Activated CD4-positive, alpha-beta memory T cell treated with anti-CD3 and anti-CD28 coated beads for 36 hours (primary cell): ENCODE measurements at regions of chr19 and their contacts with region 1.

Region 1: DNA sequence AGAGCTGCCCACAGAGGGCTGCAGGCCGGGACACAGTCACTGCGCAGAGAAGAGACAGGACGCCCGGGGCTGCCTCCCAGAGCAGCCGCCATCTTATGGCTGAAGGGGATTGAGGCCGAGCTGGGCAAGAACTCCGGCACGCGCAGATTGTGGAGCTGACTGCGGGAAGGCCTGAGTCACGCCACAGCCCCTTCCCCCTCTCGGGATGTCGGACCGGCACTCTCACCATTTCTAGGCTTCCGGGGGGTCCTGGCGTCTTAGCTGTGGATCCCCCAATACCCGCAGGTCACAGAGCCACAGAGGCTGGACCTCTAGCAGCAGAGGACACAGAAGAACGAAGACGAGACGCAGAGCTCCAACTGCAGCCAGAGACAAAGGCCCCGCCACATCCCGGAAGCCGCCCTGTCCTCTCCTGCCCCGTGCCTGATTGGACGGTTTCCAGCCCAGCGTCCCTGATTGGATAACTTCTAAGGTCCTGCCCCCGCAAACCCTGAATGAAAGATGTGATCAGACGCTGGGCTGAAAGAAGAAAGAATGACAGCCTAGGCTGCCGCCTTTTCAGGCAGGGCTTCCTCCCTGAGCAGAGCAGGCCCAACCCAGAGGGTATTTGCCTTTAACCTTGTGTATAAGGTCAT is at the start of gene ZNF43:
- DNase-seq: peak; percentile 96
- H3K4me3 Mint-ChIP-seq: peak within 1 kb of the TSS; percentile 95
- H3K27ac Mint-ChIP-seq: peak within 1 kb of the TSS; percentile 99
- H3K4me1 Mint-ChIP-seq: peaks cover 37% of the 10 kb centered on the region
- H3K27me3 Mint-ChIP-seq: no peaks in the 10 kb centered on the region
- total RNA-seq, gene ZNF43: 25.2 to 25.3 TPM

Region 2: DNA sequence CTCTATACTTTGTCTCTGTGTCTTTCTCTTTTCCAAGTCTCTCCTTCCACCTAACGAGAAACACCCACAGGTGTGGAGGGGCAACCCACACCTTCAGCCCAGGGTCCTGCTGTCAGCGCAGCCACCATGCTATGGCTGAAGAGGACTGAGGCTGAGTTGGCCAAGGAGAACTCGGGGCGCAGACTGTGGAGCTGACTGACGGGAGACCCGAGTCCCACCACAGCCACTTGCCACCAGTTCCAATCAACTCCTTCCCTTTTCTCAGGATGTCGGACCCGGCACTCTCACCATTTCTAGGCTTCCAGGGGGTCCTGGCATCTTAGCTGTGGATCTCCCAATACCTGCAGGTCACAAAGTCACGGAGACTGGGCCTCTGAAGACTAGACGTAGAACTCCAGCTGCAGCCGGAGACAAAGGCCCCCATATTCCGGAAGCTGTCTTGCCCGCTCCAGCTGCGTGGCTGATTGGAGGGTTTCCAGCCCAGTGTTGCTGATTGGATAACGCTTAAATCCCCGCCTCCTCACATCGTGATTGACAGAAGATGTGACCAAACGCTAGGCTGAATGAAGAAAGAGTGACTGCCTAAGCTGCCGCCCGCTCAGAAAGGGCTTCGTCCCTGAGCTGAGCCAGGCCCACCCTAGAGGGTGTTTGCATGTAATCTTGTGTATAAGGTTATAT is 267.0 kb before region 1 on chr19:
- CTCF ChIA-PET with region 1: no interaction called
- POLR2A ChIA-PET with region 1: no interaction called
- intact Hi-C with region 1: loop called (anchors 10 kb)
- DNase-seq: peak; percentile 92
- H3K4me3 Mint-ChIP-seq: peak overlapping the region; percentile 94
- H3K27ac Mint-ChIP-seq: peak overlapping the region; percentile 91
- H3K4me1 Mint-ChIP-seq: peaks cover 23% of the 10 kb centered on the region
- H3K27me3 Mint-ChIP-seq: no peaks in the 10 kb centered on the region

Region 3: GRCh38 chr19:21851596-21852345 is 15.8 kb after region 1 on chr19:
- CTCF ChIA-PET with region 1: interaction called, 11 read pairs
- POLR2A ChIA-PET with region 1: interaction called, 46 read pairs
- intact Hi-C with region 1: loop called (anchors 1 kb)
- DNase-seq: peak; percentile 96
- H3K4me3 Mint-ChIP-seq: peak overlapping the region; percentile 90
- H3K27ac Mint-ChIP-seq: peak overlapping the region; percentile 83
- H3K4me1 Mint-ChIP-seq: peaks cover 27% of the 10 kb centered on the region
- H3K27me3 Mint-ChIP-seq: no peaks in the 10 kb centered on the region